Lower lobe of right lung (tissue), 2 donors: ENCODE measurements at regions of chr22 and their contacts with region 1.

Region 1: GRCh38 chr22:37862570-37863325 is 13.5 kb downstream of the EIF3L start:
- DNase-seq: no peak
- ATAC-seq: no peak
- H3K4me3 ChIP-seq: no peak overlapping the region
- H3K27ac ChIP-seq: no peak overlapping the region
- H3K4me1 ChIP-seq: peaks cover 23% of the 10 kb centered on the region
- H3K27me3 ChIP-seq: no peaks in the 10 kb centered on the region
- CTCF ChIP-seq: no peak

Region 2: GRCh38 chr22:37817705-37818408 is 44.9 kb before region 1 on chr22:
- intact Hi-C with region 1: loop called (anchors 10 kb)
- DNase-seq: peak; percentile 83
- ATAC-seq: peak; percentile 95 to 96
- H3K4me3 ChIP-seq: peak overlapping the region; percentile 49
- H3K27ac ChIP-seq: no peak overlapping the region
- H3K4me1 ChIP-seq: peaks cover 20% of the 10 kb centered on the region
- H3K27me3 ChIP-seq: peaks cover 39% of the 10 kb centered on the region
- CTCF ChIP-seq: peak; percentile 96